ENCODE measurements at regions of chr4 and their contacts with region 1.

Region 1: DNA sequence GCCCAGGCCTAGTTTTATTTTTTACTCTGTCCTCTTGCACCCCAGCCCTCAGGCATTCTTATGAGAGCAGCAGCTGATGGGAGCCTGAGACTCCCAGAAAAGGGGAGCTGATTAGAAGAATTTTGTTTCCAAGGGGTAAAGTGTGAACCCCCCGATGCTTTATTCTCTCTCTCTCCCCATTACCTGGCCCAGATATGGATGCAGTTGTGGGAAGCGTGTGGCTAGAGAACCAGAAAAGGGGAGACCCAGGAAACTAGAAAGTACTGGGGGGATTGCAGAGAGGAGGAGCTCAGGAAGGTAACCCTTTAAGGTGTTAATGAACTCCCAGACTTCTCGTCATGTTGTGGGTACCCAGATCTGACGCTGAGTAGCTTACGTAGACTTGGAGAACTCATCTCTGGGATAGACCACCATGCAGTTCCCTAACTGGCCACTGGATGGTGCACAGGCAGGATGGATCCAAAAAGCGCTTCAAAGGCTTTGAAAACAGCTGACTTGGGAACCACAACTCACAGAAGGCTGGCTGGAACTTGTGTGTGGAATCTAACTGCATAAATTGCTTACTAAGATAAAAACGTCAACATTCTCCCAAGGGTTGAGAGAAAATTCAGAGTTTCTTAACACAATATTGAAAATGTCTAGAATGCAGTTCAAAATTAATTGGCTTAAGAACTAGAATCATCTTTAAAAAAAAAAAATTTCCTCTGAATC is 64.7 kb downstream of the TBC1D14 start:
- DNase-seq: peak; percentile 87
- H3K4me3 ChIP-seq: no peak overlapping the region
- H3K27ac ChIP-seq: no peak overlapping the region
- H3K4me1 ChIP-seq: no peaks in the 10 kb centered on the region; a peak in 1 of 4 replicates
- H3K27me3 ChIP-seq: no peaks in the 10 kb centered on the region
- CTCF ChIP-seq: peak; percentile 89
- EP300 ChIP-seq: no peak
- RAD21 ChIP-seq: peak; percentile 81

Region 2: GRCh38 chr4:6909073-6909965 is 65.0 kb before region 1 on chr4 and contains the start of gene TBC1D14:
- CTCF ChIA-PET with region 1: interaction called, 11 read pairs
- POLR2A ChIA-PET with region 1: no interaction called
- DNase-seq: peak; percentile 98
- H3K4me3 ChIP-seq: peak within 1 kb of the TSS; percentile 83 to 91
- H3K27ac ChIP-seq: peak within 1 kb of the TSS; percentile 93 to 95
- H3K4me1 ChIP-seq: peaks cover 0 to 26% of the 10 kb centered on the region in 2 experiments; a peak in 1 of 4 replicates
- H3K27me3 ChIP-seq: no peaks in the 10 kb centered on the region
- CTCF ChIP-seq: peak; percentile 31
- EP300 ChIP-seq: no peak; a peak in 1 of 4 replicates
- RAD21 ChIP-seq: no peak
- polyA plus RNA-seq, gene TBC1D14: 39.5 and 42.6 TPM in 2 replicates

Region 3: DNA sequence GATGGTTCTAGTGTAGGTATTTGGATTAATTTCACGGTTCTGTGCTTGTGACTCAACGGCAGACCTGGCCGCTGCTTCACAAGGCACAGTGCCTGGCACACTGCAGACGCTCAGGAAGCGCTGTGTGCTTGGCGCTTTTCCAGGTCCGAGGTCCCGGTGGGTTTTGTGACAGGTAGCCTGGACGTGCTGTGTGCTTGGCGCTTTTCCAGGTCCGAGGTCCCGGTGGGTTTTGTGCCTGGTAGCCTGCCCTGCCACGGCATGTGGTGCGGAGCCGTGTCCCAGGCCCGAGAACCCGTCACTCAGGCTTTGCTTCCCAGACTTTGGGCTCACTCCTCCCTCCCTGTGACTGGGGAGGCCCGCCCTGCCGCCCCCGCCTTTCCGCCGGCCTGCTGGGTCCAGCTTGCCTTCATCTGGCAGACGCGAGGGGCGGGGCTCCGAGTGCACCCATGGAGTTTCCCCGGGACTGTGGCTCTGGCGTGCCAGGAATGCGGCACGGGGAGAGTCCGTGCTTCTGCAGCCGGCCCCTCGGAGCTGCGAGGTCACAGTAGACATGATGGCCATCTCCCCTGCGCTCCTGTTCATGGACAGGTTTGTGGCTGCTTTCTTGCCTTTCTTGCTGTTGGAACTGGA is 20.4 kb before region 1 on chr4:
- CTCF ChIA-PET with region 1: interaction called, 18 read pairs
- POLR2A ChIA-PET with region 1: no interaction called
- DNase-seq: peak; percentile 61
- H3K4me3 ChIP-seq: no peak overlapping the region
- H3K27ac ChIP-seq: no peak overlapping the region
- H3K4me1 ChIP-seq: peaks cover 0 to 9% of the 10 kb centered on the region in 2 experiments; a peak in 1 of 4 replicates
- H3K27me3 ChIP-seq: no peaks in the 10 kb centered on the region
- CTCF ChIP-seq: no peak
- EP300 ChIP-seq: no peak
- RAD21 ChIP-seq: no peak

Region 4: GRCh38 chr4:6986781-6987587 is 12.7 kb after region 1 on chr4:
- CTCF ChIA-PET with region 1: interaction called, 27 read pairs
- POLR2A ChIA-PET with region 1: interaction called, 6 read pairs
- DNase-seq: peak; percentile 99
- H3K4me3 ChIP-seq: peak overlapping the region; percentile 76 to 96
- H3K27ac ChIP-seq: peak overlapping the region; percentile 88 to 89
- H3K4me1 ChIP-seq: peaks cover 25 to 51% of the 10 kb centered on the region in 2 experiments
- H3K27me3 ChIP-seq: no peaks in the 10 kb centered on the region
- CTCF ChIP-seq: no peak
- EP300 ChIP-seq: no peak
- RAD21 ChIP-seq: peak; percentile 26; the same call in 1 of the 2 replicates

Region 5: GRCh38 chr4:7067452-7068278 is 93.4 kb after region 1 on chr4 and contains the start of gene GRPEL1:
- CTCF ChIA-PET with region 1: interaction called, 33 read pairs
- POLR2A ChIA-PET with region 1: interaction called, 3 read pairs
- DNase-seq: peak; percentile 99
- H3K4me3 ChIP-seq: peak within 1 kb of the TSS; percentile 86 to 91
- H3K27ac ChIP-seq: peak within 1 kb of the TSS; percentile 72 to 80
- H3K4me1 ChIP-seq: peaks cover 0 to 17% of the 10 kb centered on the region in 2 experiments; a peak in 2 of 4 replicates
- H3K27me3 ChIP-seq: no peaks in the 10 kb centered on the region
- CTCF ChIP-seq: no peak
- EP300 ChIP-seq: no peak
- RAD21 ChIP-seq: no peak
- polyA plus RNA-seq, gene GRPEL1: 29.8 and 32.8 TPM in 2 replicates